Activated CD4-positive, alpha-beta T cell treated with anti-CD3 and anti-CD28 coated beads, Interleukin-2, amount 10 ng/mL, durations not matched to agents 24 days and 14 days (primary cell): ENCODE measurements at regions of chr6 and their contacts with region 1.

Region 1: GRCh38 chr6:11700118-11700718 is 78.4 kb downstream of the ADTRP start:
- DNase-seq: peak; percentile 73
- H3K4me3 Mint-ChIP-seq: no peak overlapping the region
- H3K27ac Mint-ChIP-seq: no peak overlapping the region
- H3K4me1 Mint-ChIP-seq: peaks cover 23% of the 10 kb centered on the region
- H3K27me3 Mint-ChIP-seq: no peaks in the 10 kb centered on the region

Region 2: GRCh38 chr6:11722805-11723631 is 22.8 kb after region 1 on chr6:
- intact Hi-C with region 1: no loop called
- DNase-seq: no peak
- H3K4me3 Mint-ChIP-seq: peak overlapping the region; percentile 68
- H3K27ac Mint-ChIP-seq: peak overlapping the region; percentile 79
- H3K4me1 Mint-ChIP-seq: peaks cover 50% of the 10 kb centered on the region
- H3K27me3 Mint-ChIP-seq: no peaks in the 10 kb centered on the region

Region 3: GRCh38 chr6:11738661-11739375 is 38.6 kb after region 1 on chr6:
- intact Hi-C with region 1: loop called (anchors 5 kb)
- DNase-seq: no peak
- H3K4me3 Mint-ChIP-seq: no peak overlapping the region
- H3K27ac Mint-ChIP-seq: no peak overlapping the region
- H3K4me1 Mint-ChIP-seq: peaks cover 9% of the 10 kb centered on the region
- H3K27me3 Mint-ChIP-seq: peaks cover 1% of the 10 kb centered on the region

Region 4: GRCh38 chr6:12097791-12098190 is 397.6 kb after region 1 on chr6:
- intact Hi-C with region 1: no loop called
- DNase-seq: no peak
- H3K4me3 Mint-ChIP-seq: no peak overlapping the region
- H3K27ac Mint-ChIP-seq: no peak overlapping the region
- H3K4me1 Mint-ChIP-seq: peaks cover 23% of the 10 kb centered on the region
- H3K27me3 Mint-ChIP-seq: no peaks in the 10 kb centered on the region

Region 5: GRCh38 chr6:12605888-12606345 is 905.7 kb after region 1 on chr6:
- intact Hi-C with region 1: loop called (anchors 5 kb)
- DNase-seq: peak; percentile 84
- H3K4me3 Mint-ChIP-seq: peak overlapping the region; percentile 39
- H3K27ac Mint-ChIP-seq: no peak overlapping the region
- H3K4me1 Mint-ChIP-seq: peaks cover 13% of the 10 kb centered on the region
- H3K27me3 Mint-ChIP-seq: peaks cover 7% of the 10 kb centered on the region